ENCODE measurements at regions of chr3 and their contacts with region 1.

Region 1: DNA sequence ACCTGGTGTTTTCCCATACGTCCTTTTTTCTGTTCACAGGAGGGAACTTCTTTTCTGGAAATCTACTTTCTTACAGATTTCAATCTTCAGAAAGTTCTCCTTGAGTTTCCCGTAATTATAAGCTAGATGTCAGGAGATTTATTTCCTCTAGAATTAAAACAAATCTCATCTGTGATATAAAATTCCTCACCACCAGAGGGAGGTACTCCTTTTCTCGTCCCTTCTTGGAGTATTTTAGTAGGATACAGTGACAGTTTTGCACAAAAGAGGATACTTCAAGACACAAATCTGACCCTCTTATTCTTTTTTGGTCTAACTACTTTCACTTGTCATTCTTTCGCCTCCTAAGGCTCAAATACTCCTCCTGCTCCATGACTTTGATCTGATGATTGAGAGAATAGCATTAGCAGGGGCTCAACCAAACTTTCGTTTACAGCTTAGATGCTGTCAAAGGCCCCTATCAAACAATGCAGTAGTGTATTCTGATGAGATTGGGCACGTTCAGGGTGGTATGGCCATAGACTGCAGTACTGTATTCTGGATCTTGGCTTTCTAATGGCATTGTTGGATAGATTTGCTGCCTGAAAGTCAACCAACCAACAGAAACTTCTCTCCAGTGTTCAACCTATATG is 38.0 kb downstream of the TMEM41A start:
- DNase-seq: peak; percentile 54
- H3K4me3 Mint-ChIP-seq: no peak overlapping the region
- H3K27ac Mint-ChIP-seq: no peak overlapping the region
- H3K4me1 Mint-ChIP-seq: no peaks in the 10 kb centered on the region
- H3K27me3 Mint-ChIP-seq: no peaks in the 10 kb centered on the region
- CTCF ChIP-seq: peak; percentile 46

Region 2: GRCh38 chr3:185488465-185488864 is 27.6 kb after region 1 on chr3:
- CTCF ChIA-PET with region 1: interaction called, 10 read pairs
- POLR2A ChIA-PET with region 1: no interaction called
- intact Hi-C with region 1: no loop called
- DNase-seq: no peak
- H3K4me3 Mint-ChIP-seq: no peak overlapping the region
- H3K27ac Mint-ChIP-seq: no peak overlapping the region
- H3K4me1 Mint-ChIP-seq: peaks cover 5% of the 10 kb centered on the region
- H3K27me3 Mint-ChIP-seq: no peaks in the 10 kb centered on the region
- CTCF ChIP-seq: no peak

Region 3: DNA sequence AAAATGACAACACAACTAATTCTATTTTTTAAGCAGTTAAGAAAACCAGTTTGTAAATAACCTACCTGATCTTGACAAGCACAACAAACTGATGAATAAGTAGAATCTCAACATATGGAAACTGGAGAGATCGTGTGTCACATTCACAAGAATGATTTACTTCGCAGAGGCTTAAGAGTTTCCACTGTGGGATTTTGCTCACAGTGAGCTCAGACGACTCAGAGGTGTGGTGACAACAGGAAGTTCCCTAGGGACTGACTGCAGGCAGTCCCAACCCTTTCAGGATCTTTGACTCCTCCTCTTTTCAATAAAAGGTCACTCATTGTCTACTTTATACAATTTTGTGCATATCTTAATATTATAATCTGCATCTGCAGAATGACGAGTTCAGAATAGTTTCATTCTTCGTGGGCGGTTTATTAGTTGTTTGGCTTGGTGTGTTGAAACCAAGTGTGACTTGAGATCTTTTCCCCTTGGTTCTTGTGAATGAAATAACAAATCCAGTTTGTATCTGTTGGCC is 91.6 kb after region 1 on chr3 and contains the start of gene LIPH:
- CTCF ChIA-PET with region 1: interaction called, 85 read pairs
- POLR2A ChIA-PET with region 1: no interaction called
- intact Hi-C with region 1: no loop called
- DNase-seq: peak; percentile 51
- H3K4me3 Mint-ChIP-seq: peak within 1 kb of the TSS; percentile 14
- H3K27ac Mint-ChIP-seq: peak within 1 kb of the TSS; percentile 65
- H3K4me1 Mint-ChIP-seq: peaks cover 24% of the 10 kb centered on the region
- H3K27me3 Mint-ChIP-seq: no peaks in the 10 kb centered on the region
- CTCF ChIP-seq: no peak
- total RNA-seq, gene LIPH: 0.07 and 0.32 TPM in 2 replicates

Region 4: GRCh38 chr3:185561374-185561943 is 100.6 kb after region 1 on chr3:
- CTCF ChIA-PET with region 1: interaction called, 85 read pairs
- POLR2A ChIA-PET with region 1: interaction called, 5 read pairs
- intact Hi-C with region 1: loop called (anchors 1 kb)
- DNase-seq: no peak
- H3K4me3 Mint-ChIP-seq: no peak overlapping the region
- H3K27ac Mint-ChIP-seq: no peak overlapping the region
- H3K4me1 Mint-ChIP-seq: peaks cover 15% of the 10 kb centered on the region
- H3K27me3 Mint-ChIP-seq: no peaks in the 10 kb centered on the region
- CTCF ChIP-seq: no peak

Region 5: GRCh38 chr3:185572183-185572582 is 111.3 kb after region 1 on chr3:
- CTCF ChIA-PET with region 1: interaction called, 61 read pairs
- POLR2A ChIA-PET with region 1: interaction called, 6 read pairs
- intact Hi-C with region 1: loop called (anchors 5 kb)
- DNase-seq: no peak
- H3K4me3 Mint-ChIP-seq: no peak overlapping the region
- H3K27ac Mint-ChIP-seq: no peak overlapping the region
- H3K4me1 Mint-ChIP-seq: peaks cover 7% of the 10 kb centered on the region
- H3K27me3 Mint-ChIP-seq: no peaks in the 10 kb centered on the region
- CTCF ChIP-seq: no peak

Region 6: GRCh38 chr3:185585859-185586685 is 125.2 kb after region 1 on chr3 and contains the start of gene SENP2:
- CTCF ChIA-PET with region 1: interaction called, 7 read pairs
- POLR2A ChIA-PET with region 1: interaction called, 11 read pairs
- intact Hi-C with region 1: no loop called
- DNase-seq: peak; percentile 99
- H3K4me3 Mint-ChIP-seq: peak within 1 kb of the TSS; percentile 96
- H3K27ac Mint-ChIP-seq: peak within 1 kb of the TSS; percentile 98
- H3K4me1 Mint-ChIP-seq: peaks cover 10% of the 10 kb centered on the region
- H3K27me3 Mint-ChIP-seq: no peaks in the 10 kb centered on the region
- CTCF ChIP-seq: no peak
- total RNA-seq, gene SENP2: 27.0 and 38.5 TPM in 2 replicates

Region 7: DNA sequence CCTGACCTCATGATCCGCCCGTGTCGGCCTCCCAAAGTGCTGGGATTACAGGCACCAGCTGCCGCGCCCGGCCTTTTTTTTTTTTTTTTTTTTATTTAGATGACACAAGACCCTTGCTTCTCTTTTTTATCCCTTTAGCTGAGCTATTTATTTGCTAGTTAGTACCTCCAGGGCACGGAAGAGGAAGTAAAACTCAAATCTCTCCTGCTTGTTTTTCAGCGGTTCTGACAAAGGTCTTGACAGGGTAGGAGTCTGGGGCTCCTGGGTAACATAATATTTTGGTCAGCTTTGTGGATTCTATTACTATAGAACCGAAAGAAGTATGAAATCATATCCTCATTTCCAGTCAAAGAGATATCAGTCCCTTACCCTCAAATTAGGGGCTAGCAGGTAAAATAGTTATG is 692.1 kb after region 1 on chr3:
- CTCF ChIA-PET with region 1: no interaction called
- POLR2A ChIA-PET with region 1: no interaction called
- intact Hi-C with region 1: no loop called
- DNase-seq: no peak
- H3K4me3 Mint-ChIP-seq: no peak overlapping the region
- H3K27ac Mint-ChIP-seq: no peak overlapping the region
- H3K4me1 Mint-ChIP-seq: no peaks in the 10 kb centered on the region
- H3K27me3 Mint-ChIP-seq: peaks cover 28% of the 10 kb centered on the region
- CTCF ChIP-seq: no peak

Measured in MCF 10A (cell line).